Activated naive CD4-positive, alpha-beta T cell treated with anti-CD3 and anti-CD28 coated beads for 36 hours (primary cell): ENCODE measurements at regions of chr6 and their contacts with region 1.

Region 1: GRCh38 chr6:127907960-127908640 is 7.2 kb upstream of the THEMIS start:
- DNase-seq: peak; percentile 60
- H3K4me3 Mint-ChIP-seq: peak overlapping the region; percentile 51
- H3K27ac Mint-ChIP-seq: peak overlapping the region; percentile 77
- H3K4me1 Mint-ChIP-seq: peaks cover 42% of the 10 kb centered on the region
- H3K27me3 Mint-ChIP-seq: no peaks in the 10 kb centered on the region

Region 2: GRCh38 chr6:127592964-127593363 is 315.1 kb before region 1 on chr6:
- CTCF ChIA-PET with region 1: no interaction called
- intact Hi-C with region 1: no loop called
- DNase-seq: no peak
- H3K4me3 Mint-ChIP-seq: no peak overlapping the region
- H3K27ac Mint-ChIP-seq: no peak overlapping the region
- H3K4me1 Mint-ChIP-seq: no peaks in the 10 kb centered on the region
- H3K27me3 Mint-ChIP-seq: peaks cover 4% of the 10 kb centered on the region

Region 3: DNA sequence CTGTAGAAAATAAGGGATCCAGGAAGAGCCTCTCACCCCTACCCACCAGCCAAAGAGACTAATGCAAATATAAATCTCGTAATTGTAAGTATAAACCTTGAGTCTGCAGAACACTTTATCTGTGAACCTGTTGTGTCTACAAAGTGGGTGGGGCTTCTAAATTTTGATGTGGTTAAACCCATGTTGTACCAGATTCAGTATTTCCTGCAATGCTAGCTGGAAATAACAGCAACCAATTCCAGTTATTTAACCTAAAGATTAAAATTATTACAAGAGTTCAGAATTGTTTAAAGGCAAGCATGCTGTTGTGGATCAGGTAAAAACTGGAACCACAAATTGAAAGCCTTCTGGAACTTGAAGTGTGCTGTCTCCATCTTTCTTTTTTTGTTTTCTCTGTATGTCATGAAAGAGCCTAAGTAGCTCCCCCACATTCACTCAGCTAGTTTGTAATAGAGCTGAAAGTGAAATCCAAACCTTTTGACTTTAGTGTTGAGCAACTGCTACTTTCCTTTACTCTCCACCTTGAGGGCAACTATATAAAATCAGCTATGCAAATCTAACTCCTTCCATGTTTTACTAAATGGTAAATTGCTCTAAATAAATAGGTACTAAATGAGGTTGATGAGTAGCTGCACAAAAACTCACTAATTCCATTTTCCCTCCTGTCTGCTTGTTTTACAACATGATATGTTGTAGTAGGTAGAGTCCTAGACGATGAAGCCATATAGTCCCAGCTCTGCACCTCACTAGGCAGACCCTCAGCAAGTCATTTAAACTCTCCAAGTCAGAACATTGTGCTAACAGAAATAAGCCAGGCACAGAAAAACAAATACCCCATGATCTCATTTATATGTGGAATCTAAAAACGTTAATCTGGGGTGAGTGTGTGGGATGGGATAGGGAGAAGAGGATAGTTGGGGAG is 10.7 kb after region 1 on chr6:
- CTCF ChIA-PET with region 1: interaction called, 19 read pairs
- intact Hi-C with region 1: loop called (anchors 1 kb)
- DNase-seq: no peak
- H3K4me3 Mint-ChIP-seq: peak overlapping the region; percentile 32
- H3K27ac Mint-ChIP-seq: peak overlapping the region; percentile 31
- H3K4me1 Mint-ChIP-seq: peaks cover 80% of the 10 kb centered on the region
- H3K27me3 Mint-ChIP-seq: no peaks in the 10 kb centered on the region

Region 4: GRCh38 chr6:129251669-129252376 is 1343.7 kb after region 1 on chr6:
- CTCF ChIA-PET with region 1: no interaction called
- intact Hi-C with region 1: no loop called
- DNase-seq: peak; percentile 76
- H3K4me3 Mint-ChIP-seq: no peak overlapping the region
- H3K27ac Mint-ChIP-seq: no peak overlapping the region
- H3K4me1 Mint-ChIP-seq: peaks cover 23% of the 10 kb centered on the region
- H3K27me3 Mint-ChIP-seq: peaks cover 13% of the 10 kb centered on the region